Vagina (tissue), 2 donors: ENCODE measurements at regions of chr3 and their contacts with region 1.

Region 1: GRCh38 chr3:21484828-21485144 is 266.2 kb downstream of the ZNF385D start:
- DNase-seq: no peak
- H3K4me3 ChIP-seq: no peak overlapping the region
- H3K27ac ChIP-seq: no peak overlapping the region
- H3K4me1 ChIP-seq: no peaks in the 10 kb centered on the region
- H3K27me3 ChIP-seq: no peaks in the 10 kb centered on the region
- CTCF ChIP-seq: no peak
- POLR2A ChIP-seq: no peak

Region 2: GRCh38 chr3:21464746-21465145 is 20.0 kb before region 1 on chr3:
- intact Hi-C with region 1: loop called (anchors 1 kb)
- DNase-seq: no peak
- H3K4me3 ChIP-seq: no peak overlapping the region
- H3K27ac ChIP-seq: no peak overlapping the region
- H3K4me1 ChIP-seq: no peaks in the 10 kb centered on the region
- H3K27me3 ChIP-seq: no peaks in the 10 kb centered on the region
- CTCF ChIP-seq: no peak
- POLR2A ChIP-seq: no peak

Region 3: DNA sequence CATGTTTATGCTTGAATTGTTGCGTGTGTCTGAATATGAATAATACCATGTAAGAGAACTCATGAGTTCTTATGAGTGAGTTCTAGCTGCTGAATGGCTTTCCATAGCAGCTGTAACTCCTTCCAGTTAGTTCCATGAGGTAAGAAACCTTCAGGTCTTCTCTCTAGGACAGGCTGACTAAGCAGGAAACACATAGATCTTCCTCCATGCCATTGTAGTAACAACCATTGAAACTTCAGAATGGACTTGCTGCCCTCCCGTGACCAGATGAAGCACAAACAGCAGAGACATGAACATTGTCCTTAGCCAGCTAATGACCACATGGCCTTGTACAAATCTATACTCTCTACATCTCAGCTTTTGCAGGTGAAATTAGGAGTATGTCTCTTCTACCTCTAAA is 66.2 kb after region 1 on chr3:
- intact Hi-C with region 1: no loop called
- DNase-seq: no peak
- H3K4me3 ChIP-seq: no peak overlapping the region
- H3K27ac ChIP-seq: no peak overlapping the region
- H3K4me1 ChIP-seq: no peaks in the 10 kb centered on the region
- H3K27me3 ChIP-seq: no peaks in the 10 kb centered on the region
- CTCF ChIP-seq: no peak
- POLR2A ChIP-seq: no peak